CD4-positive, alpha-beta T cell (primary cell): ENCODE measurements at regions of chr9 and their contacts with region 1.

Region 1: GRCh38 chr9:120714088-120714845 is at the start of gene MEGF9:
- DNase-seq: peak; percentile 88 to 98 (median 94)
- ATAC-seq: peak; percentile 93
- H3K4me3 ChIP-seq: peak within 1 kb of the TSS; percentile 82
- H3K4me3 Mint-ChIP-seq: peak within 1 kb of the TSS; percentile 90
- H3K27ac ChIP-seq: peak within 1 kb of the TSS; percentile 56 to 60
- H3K27ac Mint-ChIP-seq: peak within 1 kb of the TSS; percentile 79
- H3K4me1 ChIP-seq: peaks cover 35% of the 10 kb centered on the region
- H3K4me1 Mint-ChIP-seq: peaks cover 39% of the 10 kb centered on the region
- H3K27me3 ChIP-seq: no peaks in the 10 kb centered on the region
- H3K27me3 Mint-ChIP-seq: no peaks in the 10 kb centered on the region
- CTCF ChIP-seq: no peak
- total RNA-seq, gene MEGF9: 4.0 to 4.5 TPM

Region 2: DNA sequence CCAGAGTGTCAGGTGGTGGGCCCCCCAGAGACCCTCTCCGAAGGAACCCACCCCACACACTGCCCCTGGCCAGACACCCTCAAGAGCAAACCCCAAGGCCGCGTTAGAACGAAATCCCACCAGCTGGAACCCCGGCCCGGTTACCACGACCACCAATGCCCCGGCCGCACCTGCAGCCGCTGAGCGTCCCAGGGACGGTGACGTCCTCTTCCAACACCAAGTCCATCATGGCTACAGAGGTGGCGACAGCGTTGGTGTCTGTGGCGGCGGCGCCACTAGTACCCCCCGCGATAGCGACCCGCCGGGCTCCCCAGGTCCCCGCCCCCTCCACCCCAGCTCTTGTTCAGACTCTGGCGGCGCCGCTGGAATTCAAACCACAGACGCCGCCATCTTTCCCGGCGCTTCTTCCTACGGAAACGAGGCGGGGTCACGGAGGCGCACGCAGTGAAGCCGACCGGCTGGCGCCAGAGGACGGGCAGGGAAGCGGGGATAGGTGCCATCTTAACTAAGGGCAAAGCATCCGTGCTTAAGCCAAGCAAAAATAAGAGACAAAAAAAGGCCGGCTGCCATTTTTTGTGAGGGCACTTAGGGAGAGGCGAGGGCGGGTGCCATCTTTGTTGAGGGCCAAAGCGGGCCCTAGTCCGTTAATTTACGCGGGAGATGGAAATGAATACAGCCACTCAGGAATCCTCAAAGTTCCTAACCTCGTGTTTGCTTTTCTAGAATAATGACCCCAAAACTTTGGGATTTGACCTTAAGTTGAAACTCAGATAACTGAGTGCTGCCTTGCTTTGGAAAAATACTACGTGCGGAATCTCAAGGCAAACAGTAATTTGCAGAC is 134.3 kb before region 1 on chr9 and contains the start of gene CDK5RAP2:
- CTCF ChIA-PET with region 1: no interaction called
- POLR2A ChIA-PET with region 1: no interaction called
- intact Hi-C with region 1: loop called in 1 of 2 experiments (anchors 2 kb)
- DNase-seq: peak; percentile 84 to 98 (median 90)
- ATAC-seq: peak; percentile 98
- H3K4me3 ChIP-seq: peak within 1 kb of the TSS; percentile 84
- H3K4me3 Mint-ChIP-seq: peak within 1 kb of the TSS; percentile 99
- H3K27ac ChIP-seq: peak within 1 kb of the TSS; percentile 26 to 55
- H3K27ac Mint-ChIP-seq: peak within 1 kb of the TSS; percentile 92
- H3K4me1 ChIP-seq: peaks cover 29% of the 10 kb centered on the region
- H3K4me1 Mint-ChIP-seq: peaks cover 48% of the 10 kb centered on the region
- H3K27me3 ChIP-seq: no peaks in the 10 kb centered on the region
- H3K27me3 Mint-ChIP-seq: no peaks in the 10 kb centered on the region
- CTCF ChIP-seq: no peak
- total RNA-seq, gene CDK5RAP2: 55.0 to 56.0 TPM

Region 3: DNA sequence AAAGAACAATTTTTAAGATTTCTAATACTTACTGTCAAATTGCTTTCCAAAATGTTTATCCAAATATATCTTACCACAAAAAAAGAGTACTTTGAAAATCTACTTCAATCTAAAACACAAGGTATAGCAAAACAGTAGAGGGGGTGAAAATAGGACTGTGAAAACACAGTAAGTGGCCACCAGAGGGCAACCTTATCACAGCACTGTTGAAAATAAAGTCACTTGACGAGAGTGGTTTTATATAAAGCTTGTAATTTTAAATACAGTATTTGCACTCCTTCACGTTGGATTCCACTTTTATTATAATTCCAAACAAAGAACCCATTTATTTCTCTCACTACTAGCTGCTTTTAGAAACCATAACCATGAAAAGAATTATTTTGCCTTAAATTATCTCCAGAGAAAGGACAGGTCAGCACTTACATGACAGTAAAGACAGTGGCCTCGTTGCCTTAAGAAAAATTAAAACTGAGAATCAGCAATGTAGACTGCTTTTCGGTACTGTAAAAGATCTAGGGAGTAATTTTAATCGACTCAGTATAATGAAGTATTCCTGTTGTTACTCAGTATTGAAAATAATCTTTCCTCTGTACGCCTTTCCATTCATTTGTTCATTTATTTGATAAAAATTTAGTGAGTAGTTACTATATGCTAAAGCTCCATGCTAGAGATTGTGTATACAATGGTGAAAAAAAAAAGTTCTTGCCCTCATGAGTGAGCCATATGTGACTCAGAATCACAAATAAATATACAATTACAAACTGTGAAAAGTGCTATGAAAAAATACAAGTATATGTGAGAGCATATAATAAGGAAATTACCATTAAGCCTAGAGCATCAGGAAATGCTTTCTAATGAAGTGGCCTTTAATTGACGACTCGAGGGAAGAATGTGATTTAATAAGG is 94.3 kb before region 1 on chr9:
- CTCF ChIA-PET with region 1: interaction called, 4 read pairs
- POLR2A ChIA-PET with region 1: interaction called, 5 read pairs
- intact Hi-C with region 1: loop called in 1 of 2 experiments (anchors 1 kb)
- DNase-seq: peak; percentile 26 to 77 (median 41)
- ATAC-seq: peak; percentile 94
- H3K4me3 ChIP-seq: no peak overlapping the region
- H3K4me3 Mint-ChIP-seq: no peak overlapping the region
- H3K27ac ChIP-seq: no peak overlapping the region
- H3K27ac Mint-ChIP-seq: no peak overlapping the region
- H3K4me1 ChIP-seq: no peaks in the 10 kb centered on the region
- H3K4me1 Mint-ChIP-seq: peaks cover 4% of the 10 kb centered on the region
- H3K27me3 ChIP-seq: no peaks in the 10 kb centered on the region
- H3K27me3 Mint-ChIP-seq: no peaks in the 10 kb centered on the region
- CTCF ChIP-seq: peak; percentile 86

Region 4: GRCh38 chr9:120792898-120793765 is 78.9 kb after region 1 on chr9 and contains the start of gene FBXW2:
- CTCF ChIA-PET with region 1: no interaction called
- POLR2A ChIA-PET with region 1: interaction called, 5 read pairs
- intact Hi-C with region 1: loop called in 1 of 2 experiments (anchors 5 kb)
- DNase-seq: peak; percentile 58 to 92 (median 78)
- ATAC-seq: peak; percentile 79
- H3K4me3 ChIP-seq: peak within 1 kb of the TSS; percentile 97
- H3K4me3 Mint-ChIP-seq: peak within 1 kb of the TSS; percentile 88
- H3K27ac ChIP-seq: peak within 1 kb of the TSS; percentile 81 to 82
- H3K27ac Mint-ChIP-seq: peak within 1 kb of the TSS; percentile 92
- H3K4me1 ChIP-seq: peaks cover 39% of the 10 kb centered on the region
- H3K4me1 Mint-ChIP-seq: peaks cover 63% of the 10 kb centered on the region
- H3K27me3 ChIP-seq: no peaks in the 10 kb centered on the region
- H3K27me3 Mint-ChIP-seq: no peaks in the 10 kb centered on the region
- CTCF ChIP-seq: no peak
- total RNA-seq, gene FBXW2: 58.7 to 64.7 TPM